H1 (cell line): ENCODE measurements at regions of chr2 and their contacts with region 1.

Region 1: GRCh38 chr2:26555246-26556133 is 77.6 kb upstream of the OTOF start:
- DNase-seq: no peak
- H3K4me3 ChIP-seq: no peak overlapping the region
- H3K27ac ChIP-seq: no peak overlapping the region
- H3K4me1 ChIP-seq: peaks cover 0 to 19% (median 9%) of the 10 kb centered on the region in 4 experiments; a peak in 6 of 7 replicates
- H3K27me3 ChIP-seq: peaks cover 0 to 4% (median under 1%) of the 10 kb centered on the region in 4 experiments; a peak in 2 of 7 replicates
- CTCF ChIP-seq: peak; percentile 31 to 42 (median 34)
- EP300 ChIP-seq: no peak
- POLR2A ChIP-seq: no peak
- RAD21 ChIP-seq: peak; percentile 19 to 30; a peak in 3 of 4 replicates

Region 2: DNA sequence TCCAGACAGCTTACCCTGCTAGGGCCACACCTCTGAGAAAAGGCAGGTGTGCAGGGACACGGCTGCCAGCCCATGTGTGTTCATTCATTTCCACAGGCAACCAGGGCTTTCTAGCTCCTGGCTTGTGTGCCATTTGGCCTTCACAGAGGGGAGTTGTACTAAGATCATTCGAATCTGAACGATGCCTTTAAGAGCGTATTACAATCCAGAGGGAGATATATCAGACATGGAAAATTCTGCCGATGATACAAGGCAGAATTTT is 13.4 kb before region 1 on chr2:
- CTCF ChIA-PET with region 1: interaction called, 91 read pairs
- POLR2A ChIA-PET with region 1: interaction called, 4 read pairs
- DNase-seq: no peak
- H3K4me3 ChIP-seq: no peak overlapping the region
- H3K27ac ChIP-seq: no peak overlapping the region
- H3K4me1 ChIP-seq: peaks cover 3 to 7% (median 5%) of the 10 kb centered on the region in 4 experiments
- H3K27me3 ChIP-seq: no peaks in the 10 kb centered on the region; a peak in 1 of 7 replicates
- CTCF ChIP-seq: no peak
- EP300 ChIP-seq: no peak
- POLR2A ChIP-seq: no peak
- RAD21 ChIP-seq: no peak